ENCODE measurements at regions of chr12 and their contacts with region 1.

Region 1: DNA sequence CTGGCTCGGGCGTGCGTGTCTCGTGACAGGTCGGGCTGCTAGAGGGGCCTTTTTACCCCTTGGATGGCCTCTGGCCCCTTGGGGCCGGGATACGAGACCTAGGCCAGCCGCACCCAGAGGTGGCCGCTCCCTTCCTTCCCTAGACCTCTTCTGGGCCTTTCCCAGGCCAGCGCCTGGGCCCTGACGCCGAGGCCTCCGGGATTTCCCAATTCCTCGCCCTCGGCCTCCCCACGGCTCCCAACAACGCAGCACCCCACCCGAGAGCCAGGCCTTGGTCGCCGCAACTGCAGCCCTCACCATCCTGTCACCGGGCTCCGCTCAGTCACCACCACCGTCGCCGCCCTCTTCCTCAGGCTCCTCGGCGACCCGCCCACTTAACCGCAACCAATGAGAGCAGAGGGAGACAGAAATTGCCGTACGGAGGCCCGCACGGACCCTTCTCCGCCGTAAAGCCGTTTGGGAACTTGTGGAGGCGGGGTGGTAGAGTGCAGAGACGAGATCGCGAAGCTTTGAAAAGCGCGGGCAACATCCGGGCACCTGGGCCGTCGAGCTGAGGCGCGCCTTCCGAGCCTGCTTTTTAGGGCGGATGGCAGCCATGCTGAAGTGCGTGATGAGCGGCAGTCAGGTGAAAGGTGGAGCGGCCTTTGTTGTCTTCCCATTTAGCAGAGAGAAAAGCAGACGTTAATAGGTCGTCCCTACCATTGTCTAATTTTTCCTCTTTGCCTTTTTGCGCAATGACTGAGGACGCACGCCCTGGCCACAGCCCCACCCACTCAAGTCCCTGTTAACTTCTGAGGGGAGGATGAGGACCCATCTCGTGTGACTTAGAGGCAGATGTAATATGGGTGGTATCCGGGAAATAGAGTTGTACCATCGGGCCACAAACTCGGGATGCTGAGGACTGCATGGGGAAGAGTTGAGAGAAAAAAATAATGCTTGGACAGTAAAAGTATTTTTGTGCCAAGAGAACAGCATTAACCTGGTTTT is at the starts of genes RAD9B and VPS29:
- DNase-seq: peak; percentile 95 to 99 (median 98)

Region 2: GRCh38 chr12:110431957-110432587 is 70.0 kb before region 1 on chr12:
- intact Hi-C with region 1: no loop called
- DNase-seq: peak in 1 of 42 donors; percentile 41

Region 3: DNA sequence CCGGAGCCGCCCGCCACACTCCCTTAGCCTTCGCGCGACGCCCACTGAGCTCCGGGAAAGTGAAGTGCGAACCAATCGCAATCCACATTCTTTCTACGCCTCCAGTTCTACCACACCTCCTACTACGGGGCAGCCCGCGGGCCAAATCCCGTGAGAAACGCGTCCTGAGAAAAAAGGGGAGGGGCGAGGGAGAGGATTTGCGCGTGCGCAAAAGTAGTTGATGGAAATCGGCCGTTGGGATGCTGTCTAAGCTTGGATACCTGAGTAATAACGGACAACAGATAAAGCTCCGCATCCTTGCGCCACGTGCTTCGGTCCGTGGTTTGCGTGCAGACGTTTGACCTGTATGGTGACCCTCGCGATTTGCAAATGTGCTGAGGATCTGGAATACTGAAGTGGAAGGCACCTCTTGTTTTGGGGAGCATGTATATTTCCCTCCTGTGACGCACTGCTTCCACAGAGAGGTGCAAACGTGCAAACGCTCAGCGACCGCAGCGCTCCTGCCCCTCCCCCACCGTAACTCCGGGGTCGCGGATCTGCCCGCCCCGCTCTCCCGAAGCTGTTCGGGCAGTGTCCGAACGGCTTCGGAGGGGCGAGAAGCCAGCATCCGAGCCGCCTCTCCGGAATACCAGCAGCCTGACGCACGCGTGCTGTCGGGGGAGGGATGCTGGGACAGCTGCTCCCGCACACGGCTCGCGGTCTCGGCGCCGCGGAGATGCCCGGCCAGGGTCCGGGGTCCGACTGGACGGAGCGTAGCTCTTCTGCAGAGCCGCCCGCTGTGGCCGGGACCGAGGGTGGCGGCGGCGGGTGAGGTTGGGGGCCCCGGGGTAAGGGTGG is 33.6 kb before region 1 on chr12 and contains the starts of genes FAM216A and GPN3:
- intact Hi-C with region 1: loop called (anchors 1 kb)
- DNase-seq: peak; percentile 93 to 99 (median 97)

Region 4: DNA sequence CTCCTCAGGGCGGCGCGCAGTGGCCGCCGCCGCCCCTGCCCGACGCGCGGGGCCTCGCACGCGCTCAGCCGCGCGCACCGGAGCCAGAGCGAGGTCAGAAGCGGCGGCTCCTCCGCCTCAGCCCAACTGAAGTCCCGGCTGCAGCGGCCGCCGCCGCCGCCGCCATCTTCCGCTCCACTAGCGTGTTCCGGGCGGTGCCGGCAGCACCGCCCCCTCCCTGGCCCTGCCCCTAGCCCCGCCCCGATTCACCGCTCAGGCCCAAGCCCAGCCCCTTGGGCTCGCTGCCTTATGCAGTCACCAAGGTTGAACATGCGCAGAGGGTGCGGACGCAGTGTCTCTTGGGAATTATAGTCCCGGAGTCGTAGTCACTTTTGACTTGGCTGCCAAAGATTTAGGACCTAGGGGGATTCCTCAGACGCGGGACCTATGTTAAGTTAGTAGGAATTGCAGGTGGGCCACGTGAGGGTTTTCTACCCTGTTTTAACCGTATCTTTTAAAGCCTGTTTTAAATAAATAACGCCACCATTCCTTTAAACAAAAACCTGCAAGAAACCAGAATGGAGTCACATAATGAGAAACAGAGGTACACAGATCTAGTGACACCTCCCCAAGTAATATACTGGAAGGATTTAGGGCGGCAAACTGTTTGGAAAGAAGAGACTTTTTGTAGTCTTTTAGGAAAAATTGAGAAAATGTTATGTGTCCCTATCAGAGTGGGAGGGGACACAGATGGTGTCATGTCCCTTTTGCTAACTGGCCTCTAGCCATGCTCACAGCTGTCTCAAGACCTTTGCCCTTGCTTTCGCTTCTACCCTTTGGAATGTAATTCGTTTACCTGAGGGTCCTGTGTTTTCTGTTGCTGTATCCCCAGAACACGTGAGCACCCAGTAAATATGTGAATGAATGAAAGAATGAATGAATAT is 81.4 kb after region 1 on chr12 and contains the start of gene PPTC7:
- intact Hi-C with region 1: loop called (anchors 5 kb)
- DNase-seq: peak; percentile 97 to 99 (median 98)

Region 5: DNA sequence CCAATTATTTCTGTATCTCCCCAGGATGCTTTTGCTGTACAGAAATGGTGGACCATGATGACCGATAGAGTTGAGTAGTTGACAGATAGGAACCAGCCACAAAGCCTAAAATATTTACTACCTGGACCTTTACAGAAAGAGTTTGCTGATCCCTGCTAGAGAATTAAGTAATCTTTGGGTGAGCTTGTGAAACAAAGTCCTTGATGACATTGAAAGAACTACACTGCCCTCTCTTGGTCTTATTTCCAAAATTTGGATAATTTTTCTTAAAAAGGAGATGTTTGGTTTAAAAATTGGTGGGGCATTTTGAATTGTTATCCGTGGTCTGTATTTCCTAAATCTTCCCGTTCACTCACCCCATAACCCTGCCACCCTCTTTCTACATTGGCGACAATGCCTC is 98.2 kb after region 1 on chr12:
- intact Hi-C with region 1: loop called (anchors 5 kb)
- DNase-seq: peak in 1 of 42 donors; percentile 10

Measured in head of caudate nucleus (tissue), 42 donors.